ENCODE measurements at regions of chr14 and their contacts with region 1.

Region 1: DNA sequence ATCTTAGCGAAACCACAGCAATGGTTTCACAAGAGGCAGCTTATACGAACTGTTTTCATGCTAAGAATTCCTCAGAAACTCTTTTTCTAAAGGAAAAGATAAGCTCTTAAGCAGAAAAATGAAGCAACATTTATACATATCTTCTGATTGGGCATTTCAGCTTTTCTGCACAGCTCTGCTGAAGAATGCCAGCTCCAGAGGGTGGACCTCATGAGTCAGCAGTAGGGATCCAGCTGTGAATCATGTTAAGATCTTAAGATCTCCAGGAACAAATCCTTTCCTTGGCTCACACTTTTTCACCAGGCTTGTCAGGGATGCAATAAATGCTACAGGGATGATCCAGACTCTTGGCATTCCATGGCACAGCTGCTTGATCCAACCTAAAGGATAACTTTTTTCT is 477.1 kb upstream of the CCDC196 start:
- DNase-seq: no peak
- ATAC-seq: no peak
- H3K4me3 ChIP-seq: no peak overlapping the region
- H3K4me3 Mint-ChIP-seq: no peak overlapping the region
- H3K27ac ChIP-seq: no peak overlapping the region
- H3K27ac Mint-ChIP-seq: no peak overlapping the region
- H3K4me1 ChIP-seq: no peaks in the 10 kb centered on the region
- H3K4me1 Mint-ChIP-seq: no peaks in the 10 kb centered on the region
- H3K27me3 ChIP-seq: no peaks in the 10 kb centered on the region
- H3K27me3 Mint-ChIP-seq: no peaks in the 10 kb centered on the region
- CTCF ChIP-seq: no peak

Region 2: GRCh38 chr14:66099931-66100330 is 90.8 kb after region 1 on chr14:
- CTCF ChIA-PET with region 1: no interaction called
- POLR2A ChIA-PET with region 1: no interaction called
- intact Hi-C with region 1: loop called in 1 of 2 experiments (anchors 5 kb)
- DNase-seq: no peak
- ATAC-seq: no peak
- H3K4me3 ChIP-seq: no peak overlapping the region
- H3K4me3 Mint-ChIP-seq: no peak overlapping the region
- H3K27ac ChIP-seq: no peak overlapping the region
- H3K27ac Mint-ChIP-seq: no peak overlapping the region
- H3K4me1 ChIP-seq: no peaks in the 10 kb centered on the region
- H3K4me1 Mint-ChIP-seq: no peaks in the 10 kb centered on the region
- H3K27me3 ChIP-seq: no peaks in the 10 kb centered on the region
- H3K27me3 Mint-ChIP-seq: no peaks in the 10 kb centered on the region
- CTCF ChIP-seq: no peak

Measured in CD8-positive, alpha-beta T cell (primary cell).